Posterior vena cava (tissue), 2 donors: ENCODE measurements at regions of chr17 and their contacts with region 1.

Region 1: GRCh38 chr17:10646392-10646990 is 10.6 kb downstream of the MYH3 start:
- DNase-seq: peak; percentile 87

Region 2: DNA sequence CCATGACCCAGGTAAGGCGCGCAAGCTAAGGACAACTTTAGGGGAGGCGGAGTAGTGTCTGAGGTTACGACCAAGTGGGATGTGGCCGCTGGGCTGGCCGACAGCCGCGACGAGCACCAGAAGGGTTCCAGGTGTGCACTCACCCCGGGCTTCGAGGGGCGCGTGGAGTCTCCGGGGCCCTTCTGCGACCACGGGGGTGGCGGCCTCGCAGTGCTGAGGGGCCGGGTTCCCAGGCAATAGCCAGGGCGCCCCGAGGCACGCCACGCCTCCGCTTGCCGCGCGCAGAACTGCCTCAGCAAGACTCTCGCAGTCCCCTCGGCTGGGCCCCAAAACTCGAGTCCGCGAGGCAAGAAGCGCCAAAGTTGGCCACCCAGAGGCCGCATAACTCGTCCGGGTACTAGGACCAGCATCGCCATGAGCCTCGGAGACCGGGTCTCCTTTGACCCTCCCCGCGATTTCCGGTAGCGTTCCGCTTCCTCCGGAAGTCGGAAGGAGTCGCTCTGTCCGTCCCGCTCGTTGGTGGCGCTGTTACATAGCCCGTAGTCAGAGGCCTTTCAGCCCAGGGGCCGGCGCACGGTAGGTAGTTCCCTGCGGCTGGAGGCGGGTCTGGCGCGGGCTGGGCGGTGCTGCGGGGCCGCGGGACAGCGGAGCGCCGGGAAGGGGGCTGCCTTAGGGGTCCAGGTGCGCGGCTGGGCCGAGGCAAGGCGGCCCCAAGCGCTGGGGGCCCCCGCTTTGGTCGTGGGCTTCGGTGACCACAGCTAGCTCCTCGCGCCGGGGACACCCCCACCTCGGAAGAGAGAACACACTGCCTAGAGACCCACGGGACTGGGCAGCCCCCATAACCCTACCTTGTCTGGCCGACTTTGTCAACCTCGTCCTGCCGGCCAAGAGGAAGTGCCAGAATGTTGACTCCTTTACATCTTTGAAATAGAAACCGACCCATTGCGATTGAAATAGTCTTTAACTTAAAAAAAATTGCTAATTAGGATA is 50.9 kb after region 1 on chr17 and contains the starts of genes ADPRM and SCO1:
- intact Hi-C with region 1: loop called in 1 of 2 experiments (anchors 10 kb)
- DNase-seq: peak; percentile 98
- total RNA-seq, gene ADPRM: 8.5 to 12.0 TPM
- total RNA-seq, gene SCO1: 21.7 to 25.8 TPM